Tibial artery (tissue), 4 donors: ENCODE measurements at regions of chr3 and their contacts with region 1.

Region 1: GRCh38 chr3:37443363-37444035 is 269.1 kb upstream of the LRRFIP2 start:
- DNase-seq: no peak
- H3K4me3 ChIP-seq: no peak overlapping the region
- H3K27ac ChIP-seq: no peak overlapping the region
- H3K4me1 ChIP-seq: peaks cover 0 to 22% (median 14%) of the 10 kb centered on the region in 4 donors
- H3K27me3 ChIP-seq: no peaks in the 10 kb centered on the region
- CTCF ChIP-seq: no peak

Region 2: DNA sequence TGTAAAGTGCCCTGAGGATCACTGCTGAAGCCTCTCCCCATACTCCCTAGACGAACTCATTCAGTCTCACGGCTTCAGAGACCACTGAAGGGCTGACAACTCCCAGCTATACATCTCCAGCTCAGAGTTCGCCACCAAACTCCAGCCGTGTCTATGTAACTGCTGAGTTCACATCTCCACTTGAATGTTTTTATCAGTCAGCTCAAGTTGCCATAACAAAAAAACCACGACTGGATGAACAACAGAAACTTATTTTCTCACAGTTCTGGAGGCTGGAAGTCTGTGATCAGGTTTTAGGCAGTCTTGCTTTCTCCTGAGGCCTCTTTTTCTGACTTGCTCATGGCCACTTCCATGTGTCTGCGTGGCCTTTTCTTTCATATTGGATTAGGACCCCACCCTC is 46.1 kb before region 1 on chr3:
- intact Hi-C with region 1: loop called (anchors 10 kb)
- DNase-seq: no peak
- H3K4me3 ChIP-seq: no peak overlapping the region
- H3K27ac ChIP-seq: no peak overlapping the region
- H3K4me1 ChIP-seq: peaks cover 0 to 2% (median 0%) of the 10 kb centered on the region in 4 donors
- H3K27me3 ChIP-seq: no peaks in the 10 kb centered on the region
- CTCF ChIP-seq: no peak

Region 3: DNA sequence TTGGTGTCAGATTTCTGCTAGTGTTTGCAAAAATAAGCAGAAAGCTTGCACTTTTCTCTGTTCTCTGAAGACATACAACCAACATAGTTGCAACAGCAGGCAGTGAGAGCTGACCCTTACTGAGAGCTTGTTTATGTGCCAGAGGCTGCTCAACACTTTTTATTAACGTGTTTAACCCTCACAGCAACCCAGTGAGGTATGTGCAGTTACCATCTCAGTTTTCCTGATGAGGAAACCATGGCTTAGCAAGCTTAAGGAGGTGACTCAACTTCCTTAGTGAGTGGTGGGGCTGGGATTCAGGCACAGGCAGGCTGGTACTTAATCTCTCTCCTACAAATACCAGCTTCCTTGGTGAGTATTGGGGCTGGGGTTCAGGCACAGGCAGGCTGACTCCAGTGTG is 260.1 kb after region 1 on chr3:
- intact Hi-C with region 1: loop called (anchors 2 kb)
- DNase-seq: peak in 1 of 2 donors; percentile 32
- H3K4me3 ChIP-seq: no peak overlapping the region
- H3K27ac ChIP-seq: no peak overlapping the region
- H3K4me1 ChIP-seq: peaks cover 0 to 42% (median 24%) of the 10 kb centered on the region in 4 donors
- H3K27me3 ChIP-seq: no peaks in the 10 kb centered on the region
- CTCF ChIP-seq: no peak